Posterior vena cava (tissue), 2 donors: ENCODE measurements at regions of chr13 and their contacts with region 1.

Region 1: GRCh38 chr13:57899096-57899495 is 267.6 kb downstream of the PCDH17 start:
- DNase-seq: no peak

Region 2: DNA sequence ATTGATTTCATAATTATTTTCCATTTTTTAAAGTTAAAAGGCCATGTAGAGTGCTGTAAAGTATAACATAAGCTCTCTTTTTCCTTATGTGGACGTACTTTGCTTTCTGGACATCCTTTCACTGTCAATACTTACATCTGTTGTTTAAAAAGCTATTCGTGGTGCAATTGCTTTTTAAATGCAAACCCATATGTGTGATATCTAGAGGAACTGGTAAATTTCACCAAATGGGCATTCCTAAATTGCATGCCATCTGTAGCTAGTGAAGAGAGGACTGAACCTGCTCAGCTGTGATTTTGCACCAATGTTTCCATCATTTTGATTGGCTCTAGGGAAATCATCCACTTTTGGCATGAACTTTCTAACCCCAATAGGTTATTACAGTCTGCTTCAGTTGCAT is 138.1 kb before region 1 on chr13:
- intact Hi-C with region 1: loop called in 1 of 2 experiments (anchors 5 kb)
- DNase-seq: no peak

Region 3: DNA sequence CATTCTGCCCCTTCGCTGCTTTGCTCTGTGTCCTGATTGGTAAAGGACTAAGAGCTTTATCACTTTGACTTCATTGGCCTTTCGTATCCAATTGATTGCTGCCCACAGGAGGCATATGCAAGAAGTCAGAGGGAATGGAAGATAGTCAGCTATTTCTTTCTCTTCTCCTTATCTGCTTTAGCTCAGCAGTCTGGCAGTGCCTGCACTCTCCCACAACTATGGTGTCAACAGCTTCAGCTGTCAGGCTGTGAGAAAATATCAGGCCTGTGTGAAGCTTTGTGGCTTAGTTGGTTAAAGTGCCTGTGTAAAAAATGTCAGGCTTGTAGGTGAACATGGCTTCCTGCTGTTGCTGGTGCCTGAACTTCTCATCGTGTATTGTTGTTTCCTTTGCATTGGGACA is 24.6 kb before region 1 on chr13:
- intact Hi-C with region 1: no loop called
- DNase-seq: no peak